PC-3 (cell line): ENCODE measurements at regions of chr5 and their contacts with region 1.

Region 1: GRCh38 chr5:170986598-170986997 is 124.8 kb downstream of the RANBP17 start:
- DNase-seq: peak; percentile 29
- ATAC-seq: no peak; the same call in 1 of the 2 replicates
- H3K4me3 ChIP-seq: no peak overlapping the region
- H3K27ac ChIP-seq: no peak overlapping the region
- H3K4me1 ChIP-seq: no peaks in the 10 kb centered on the region
- H3K27me3 ChIP-seq: no peaks in the 10 kb centered on the region
- CTCF ChIP-seq: peak; percentile 54

Region 2: DNA sequence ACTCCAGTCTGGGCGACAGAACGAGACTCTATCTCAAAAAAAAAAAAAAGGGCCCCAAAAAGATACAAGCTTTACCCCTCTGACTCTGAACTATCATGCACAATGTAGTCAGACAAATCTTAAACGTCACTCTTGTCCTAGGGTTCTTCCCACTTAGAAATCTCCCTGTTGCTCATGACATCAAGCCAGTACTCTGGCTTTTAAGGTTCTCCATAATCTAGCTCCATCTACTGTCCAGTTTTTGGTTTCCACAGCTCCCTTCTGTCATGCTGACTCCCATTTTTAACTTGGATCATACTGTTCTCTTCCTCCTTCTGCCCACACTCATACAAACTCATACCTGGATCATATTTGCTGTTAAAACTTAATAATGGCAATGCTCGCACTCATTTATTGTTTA is 165.8 kb after region 1 on chr5:
- CTCF ChIA-PET with region 1: interaction called, 3 read pairs
- POLR2A ChIA-PET with region 1: no interaction called
- intact Hi-C with region 1: loop called (anchors 1 kb)
- DNase-seq: peak; percentile 76
- ATAC-seq: peak; percentile 94
- H3K4me3 ChIP-seq: no peak overlapping the region
- H3K27ac ChIP-seq: no peak overlapping the region
- H3K4me1 ChIP-seq: no peaks in the 10 kb centered on the region
- H3K27me3 ChIP-seq: no peaks in the 10 kb centered on the region
- CTCF ChIP-seq: peak; percentile 75

Region 3: DNA sequence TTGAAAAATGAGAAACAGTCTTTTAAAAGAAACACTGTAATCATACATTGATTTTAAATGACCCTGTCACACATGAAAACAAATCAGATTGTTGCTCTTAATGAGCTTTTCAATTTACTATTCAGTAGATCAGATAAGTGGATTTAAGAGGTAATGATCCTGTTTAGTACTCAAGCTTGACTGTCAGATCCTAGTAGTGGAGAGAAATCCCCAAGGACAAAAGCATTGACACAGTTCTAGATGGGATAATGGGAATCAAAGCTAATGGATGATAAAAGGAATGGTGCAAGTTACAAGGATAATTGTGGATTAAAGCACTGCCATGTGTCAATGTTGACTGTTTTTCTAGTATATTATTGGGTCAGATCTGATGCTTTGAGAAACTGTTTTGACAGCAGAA is 180.2 kb after region 1 on chr5:
- CTCF ChIA-PET with region 1: no interaction called
- POLR2A ChIA-PET with region 1: no interaction called
- intact Hi-C with region 1: loop called (anchors 5 kb)
- DNase-seq: no peak
- ATAC-seq: no peak
- H3K4me3 ChIP-seq: no peak overlapping the region
- H3K27ac ChIP-seq: no peak overlapping the region
- H3K4me1 ChIP-seq: no peaks in the 10 kb centered on the region
- H3K27me3 ChIP-seq: no peaks in the 10 kb centered on the region
- CTCF ChIP-seq: no peak